ENCODE measurements at regions of chr20 and their contacts with region 1.

Region 1: DNA sequence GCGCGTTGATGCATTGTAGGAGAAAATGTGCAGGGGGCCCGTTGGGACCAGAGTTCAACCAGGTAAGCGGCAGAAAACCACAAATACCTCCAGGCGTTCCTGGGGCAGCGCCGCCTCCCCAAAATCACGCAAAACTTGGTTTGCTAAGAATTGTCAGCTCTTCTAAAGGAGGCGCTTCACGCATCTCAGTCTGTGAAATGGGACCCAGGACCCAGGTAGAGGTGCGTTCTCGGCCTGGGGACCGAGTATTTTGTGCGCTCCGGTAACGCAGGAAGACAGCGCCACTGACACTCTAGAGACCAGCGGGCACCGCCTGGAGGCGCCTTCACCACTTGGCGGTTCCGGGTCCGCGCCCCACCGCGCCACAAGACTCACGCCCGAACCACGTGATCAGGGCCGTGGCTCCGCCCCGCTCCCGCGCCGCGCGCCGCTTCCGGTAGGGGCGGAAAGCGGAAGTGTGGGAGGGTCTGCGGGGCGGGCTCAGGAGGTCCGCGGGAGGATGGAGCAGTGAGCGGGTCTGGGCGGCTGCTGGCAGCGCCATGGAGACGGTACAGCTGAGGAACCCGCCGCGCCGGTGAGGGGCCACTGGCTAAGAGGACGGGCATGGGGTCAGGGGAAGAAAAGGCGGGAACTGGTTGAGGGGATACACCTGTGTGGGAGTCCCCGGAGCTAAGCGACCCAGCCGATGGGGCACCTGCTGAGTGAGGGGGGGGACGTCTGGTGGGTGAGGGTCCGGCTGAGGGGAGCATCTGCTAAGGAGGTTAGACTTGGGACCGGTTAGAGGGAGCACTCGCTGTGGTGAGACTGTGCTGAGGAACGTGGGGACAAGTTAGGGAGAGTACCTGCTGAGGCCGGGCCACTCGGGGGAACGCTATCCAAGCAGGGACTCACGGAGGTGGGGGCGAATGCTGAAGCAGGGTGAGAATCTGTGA is at the start of gene STK4:
- DNase-seq: peak; percentile 97
- ATAC-seq: peak; percentile 71
- H3K4me3 Mint-ChIP-seq: peak within 1 kb of the TSS; percentile 94
- H3K27ac Mint-ChIP-seq: peak within 1 kb of the TSS; percentile 98
- H3K4me1 Mint-ChIP-seq: peaks cover 55% of the 10 kb centered on the region
- H3K27me3 Mint-ChIP-seq: no peaks in the 10 kb centered on the region
- total RNA-seq, gene STK4: 156 to 164 TPM

Region 2: GRCh38 chr20:44810391-44811149 is 155.7 kb before region 1 on chr20 and contains the start of gene RIMS4:
- CTCF ChIA-PET with region 1: no interaction called
- POLR2A ChIA-PET with region 1: no interaction called
- intact Hi-C with region 1: no loop called
- DNase-seq: peak; percentile 25
- ATAC-seq: peak; percentile 76
- H3K4me3 Mint-ChIP-seq: peak within 1 kb of the TSS; percentile 28
- H3K27ac Mint-ChIP-seq: no peak within 1 kb of the TSS
- H3K4me1 Mint-ChIP-seq: peaks cover 3% of the 10 kb centered on the region
- H3K27me3 Mint-ChIP-seq: peaks cover 48% of the 10 kb centered on the region
- total RNA-seq, gene RIMS4: not detected

Region 3: DNA sequence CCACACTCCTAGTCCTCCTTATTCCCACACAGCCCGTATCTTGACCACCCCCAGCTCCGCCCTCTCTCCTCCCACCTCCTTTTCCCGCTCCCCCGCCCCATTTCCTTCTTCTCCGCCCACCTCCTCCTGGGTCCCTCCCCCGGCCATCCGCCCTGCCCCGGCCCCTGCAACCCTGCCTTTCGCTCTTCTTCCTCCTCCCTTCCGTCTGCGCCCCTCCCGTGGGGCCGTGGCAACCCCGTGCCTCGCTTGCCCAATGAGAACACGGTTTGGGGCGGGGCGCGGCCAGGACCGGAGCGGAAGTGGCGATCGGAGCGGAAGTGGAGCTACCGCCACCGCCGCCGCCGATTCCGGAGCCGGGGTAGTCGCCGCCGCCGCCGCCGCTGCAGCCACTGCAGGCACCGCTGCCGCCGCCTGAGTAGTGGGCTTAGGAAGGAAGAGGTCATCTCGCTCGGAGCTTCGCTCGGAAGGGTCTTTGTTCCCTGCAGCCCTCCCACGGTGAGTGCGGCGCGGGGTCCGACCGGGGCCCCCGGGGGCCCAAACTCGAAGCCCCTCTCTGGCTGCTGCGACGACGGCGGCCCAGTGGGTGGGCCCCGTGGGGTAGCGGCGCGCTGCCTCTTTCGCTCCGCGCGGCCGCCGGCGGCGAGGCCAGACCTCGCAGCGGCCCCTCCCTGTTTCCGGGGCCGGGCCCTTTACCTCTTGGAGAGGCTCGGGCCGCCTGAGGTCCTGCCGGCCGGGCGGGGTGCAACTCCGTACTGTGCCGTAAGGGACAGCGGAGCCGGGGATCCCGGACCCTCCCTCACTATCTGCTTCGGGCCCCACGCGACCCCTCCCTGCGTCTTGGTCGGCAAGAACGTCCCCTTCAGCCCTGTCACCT is 80.7 kb before region 1 on chr20 and contains the start of gene YWHAB:
- CTCF ChIA-PET with region 1: interaction called, 5 read pairs
- POLR2A ChIA-PET with region 1: interaction called, 11 read pairs
- intact Hi-C with region 1: loop called (anchors 1 to 2 kb)
- DNase-seq: peak; percentile 99
- ATAC-seq: peak; percentile 96
- H3K4me3 Mint-ChIP-seq: peak within 1 kb of the TSS; percentile 94
- H3K27ac Mint-ChIP-seq: peak within 1 kb of the TSS; percentile 95
- H3K4me1 Mint-ChIP-seq: peaks cover 58% of the 10 kb centered on the region
- H3K27me3 Mint-ChIP-seq: no peaks in the 10 kb centered on the region
- total RNA-seq, gene YWHAB: 273 to 326 TPM

Region 4: GRCh38 chr20:44990425-44990824 is 24.1 kb after region 1 on chr20:
- CTCF ChIA-PET with region 1: interaction called, 12 read pairs
- POLR2A ChIA-PET with region 1: interaction called, 6 read pairs
- intact Hi-C with region 1: loop called (anchors 1 kb)
- DNase-seq: peak; percentile 81
- ATAC-seq: peak; percentile 90
- H3K4me3 Mint-ChIP-seq: peak overlapping the region; percentile 70
- H3K27ac Mint-ChIP-seq: peak overlapping the region; percentile 94
- H3K4me1 Mint-ChIP-seq: peaks cover 78% of the 10 kb centered on the region
- H3K27me3 Mint-ChIP-seq: no peaks in the 10 kb centered on the region

Region 5: GRCh38 chr20:45347936-45348778 is 381.9 kb after region 1 on chr20 and contains the start of gene SDC4:
- CTCF ChIA-PET with region 1: no interaction called
- POLR2A ChIA-PET with region 1: no interaction called
- intact Hi-C with region 1: loop called in 1 of 2 experiments (anchors 2 kb)
- DNase-seq: peak; percentile 79
- ATAC-seq: peak; percentile 81
- H3K4me3 Mint-ChIP-seq: peak within 1 kb of the TSS; percentile 82
- H3K27ac Mint-ChIP-seq: peak within 1 kb of the TSS; percentile 81
- H3K4me1 Mint-ChIP-seq: peaks cover 44% of the 10 kb centered on the region
- H3K27me3 Mint-ChIP-seq: peaks cover 3% of the 10 kb centered on the region
- total RNA-seq, gene SDC4: 24.0 to 31.0 TPM

Region 6: DNA sequence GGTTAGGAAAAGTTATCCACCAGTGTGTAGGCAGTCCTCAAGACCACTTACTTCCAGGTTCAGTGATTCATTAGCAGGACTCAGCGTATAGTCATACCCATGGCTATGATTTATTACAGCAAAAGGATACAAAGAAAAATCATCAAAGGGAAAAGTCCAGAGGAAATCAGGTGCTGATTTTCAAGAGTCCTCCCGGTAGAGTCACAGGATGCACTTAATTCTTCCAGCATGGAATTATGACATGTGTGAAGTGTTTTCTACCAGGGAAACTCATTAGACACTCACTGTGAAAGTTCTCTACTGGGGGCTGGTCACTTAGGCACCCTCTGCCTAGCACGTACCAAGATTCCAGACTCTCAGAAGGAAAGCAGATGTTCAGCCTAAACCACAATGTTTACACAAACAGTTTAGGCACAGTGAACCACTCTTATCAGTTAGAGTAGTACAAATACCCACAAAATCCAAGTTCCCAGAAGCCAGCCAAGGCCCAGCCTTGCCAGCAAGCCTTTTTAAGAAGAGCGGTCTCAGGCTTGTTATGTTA is 815.2 kb after region 1 on chr20:
- CTCF ChIA-PET with region 1: no interaction called
- POLR2A ChIA-PET with region 1: no interaction called
- intact Hi-C with region 1: no loop called
- DNase-seq: no peak
- ATAC-seq: no peak
- H3K4me3 Mint-ChIP-seq: no peak overlapping the region
- H3K27ac Mint-ChIP-seq: no peak overlapping the region
- H3K4me1 Mint-ChIP-seq: peaks cover 4% of the 10 kb centered on the region
- H3K27me3 Mint-ChIP-seq: peaks cover 2% of the 10 kb centered on the region

Region 7: DNA sequence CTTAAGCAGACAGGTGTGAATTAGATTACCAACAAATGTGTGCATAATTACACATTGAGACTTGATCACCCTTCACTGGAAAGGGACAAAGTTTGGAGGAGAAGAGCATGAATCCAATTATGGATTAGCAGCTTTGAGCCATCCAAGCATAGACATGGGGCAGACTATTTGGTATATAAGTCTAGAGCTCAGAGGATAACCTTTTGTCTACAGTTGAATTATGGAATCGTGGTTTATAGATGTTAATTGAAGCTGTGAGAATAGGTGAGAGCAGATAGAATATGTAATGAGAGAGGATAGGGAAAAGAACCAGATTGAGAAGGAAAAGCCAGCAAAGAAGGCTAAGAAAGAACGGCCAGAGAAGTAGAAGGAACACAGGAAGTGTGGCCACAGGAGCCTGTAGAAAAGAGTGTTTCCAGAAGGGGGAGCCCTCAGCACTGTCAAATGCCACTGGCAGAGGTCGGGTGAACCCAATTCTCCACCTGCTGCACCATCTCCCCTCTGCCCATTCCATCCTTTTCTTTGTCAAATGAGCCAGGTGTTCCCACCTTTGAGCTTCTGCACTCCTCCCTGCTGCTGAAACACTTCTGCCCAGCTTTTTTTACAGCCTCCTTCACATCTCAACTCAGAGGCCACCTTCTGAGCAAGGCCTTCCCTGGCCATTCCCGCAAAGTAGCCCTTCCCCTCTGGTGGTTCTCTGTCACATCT is 832.8 kb after region 1 on chr20:
- CTCF ChIA-PET with region 1: no interaction called
- POLR2A ChIA-PET with region 1: no interaction called
- intact Hi-C with region 1: loop called in 1 of 2 experiments (anchors 10 kb)
- DNase-seq: peak; percentile 79
- ATAC-seq: peak; percentile 95
- H3K4me3 Mint-ChIP-seq: no peak overlapping the region
- H3K27ac Mint-ChIP-seq: peak overlapping the region; percentile 45
- H3K4me1 Mint-ChIP-seq: peaks cover 7% of the 10 kb centered on the region
- H3K27me3 Mint-ChIP-seq: no peaks in the 10 kb centered on the region